H1 (cell line): ENCODE measurements at regions of chr18 and their contacts with region 1.

Region 1: DNA sequence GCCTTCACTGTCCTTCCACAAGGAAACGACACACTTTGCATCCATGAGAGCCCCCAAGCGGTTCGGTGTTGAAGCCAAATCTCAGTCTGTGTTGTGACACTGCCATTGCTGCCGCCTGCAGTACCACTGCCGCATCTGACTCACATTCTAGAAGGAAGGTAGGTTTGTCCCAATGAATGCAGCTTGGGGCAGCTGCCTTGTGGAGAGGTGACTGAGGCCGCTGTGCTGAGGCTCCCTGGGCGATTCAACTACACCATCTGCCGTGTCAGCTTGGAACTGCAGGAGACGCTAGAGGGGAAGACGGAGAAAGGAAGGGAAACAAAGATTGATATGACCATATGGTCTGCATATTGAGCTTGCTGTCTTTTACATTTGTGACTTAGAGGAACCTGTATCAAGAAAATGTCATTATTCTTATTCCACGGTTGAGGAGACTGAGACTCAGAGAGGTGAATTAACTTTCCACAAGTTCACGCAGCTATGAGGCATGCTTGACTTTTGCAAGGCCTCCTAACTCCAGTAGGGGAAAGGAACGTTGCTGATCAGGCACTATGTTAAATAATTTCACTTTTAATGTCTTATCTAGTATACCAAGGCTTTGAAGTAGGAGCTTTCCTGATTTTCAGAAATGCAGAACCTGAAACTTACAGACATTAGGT is 43.5 kb upstream of the LMAN1 start:
- DNase-seq: peak; percentile 88
- H3K4me3 ChIP-seq: no peak overlapping the region
- H3K27ac ChIP-seq: no peak overlapping the region
- H3K4me1 ChIP-seq: no peaks in the 10 kb centered on the region
- H3K27me3 ChIP-seq: no peaks in the 10 kb centered on the region
- CTCF ChIP-seq: peak; percentile 68 to 99 (median 98)
- EP300 ChIP-seq: no peak
- POLR2A ChIP-seq: no peak
- RAD21 ChIP-seq: peak; percentile 97 to 99

Region 2: GRCh38 chr18:59268721-59269562 is 133.6 kb before region 1 on chr18:
- CTCF ChIA-PET with region 1: interaction called, 67 read pairs
- POLR2A ChIA-PET with region 1: no interaction called
- DNase-seq: peak in 1 of 2 experiments; percentile 89
- H3K4me3 ChIP-seq: peak overlapping the region; percentile 51 to 67 (median 61)
- H3K27ac ChIP-seq: no peak overlapping the region
- H3K4me1 ChIP-seq: peaks cover 0 to 44% (median 24%) of the 10 kb centered on the region in 4 experiments; a peak in 6 of 7 replicates
- H3K27me3 ChIP-seq: peaks cover 88 to 98% (median 93%) of the 10 kb centered on the region in 4 experiments
- CTCF ChIP-seq: peak in 2 of 3 experiments; percentile 52 to 92; a peak in 3 of 4 replicates
- EP300 ChIP-seq: no peak
- POLR2A ChIP-seq: no peak
- RAD21 ChIP-seq: peak in 1 of 2 experiments; percentile 47; a peak in 2 of 4 replicates

Region 3: GRCh38 chr18:59300676-59301285 is 101.8 kb before region 1 on chr18:
- CTCF ChIA-PET with region 1: interaction called, 19 read pairs
- POLR2A ChIA-PET with region 1: no interaction called
- DNase-seq: no peak
- H3K4me3 ChIP-seq: no peak overlapping the region
- H3K27ac ChIP-seq: no peak overlapping the region
- H3K4me1 ChIP-seq: no peaks in the 10 kb centered on the region
- H3K27me3 ChIP-seq: peaks cover 0 to 2% (median 0%) of the 10 kb centered on the region in 4 experiments; a peak in 2 of 7 replicates
- CTCF ChIP-seq: no peak
- EP300 ChIP-seq: no peak
- POLR2A ChIP-seq: no peak
- RAD21 ChIP-seq: no peak

Region 4: DNA sequence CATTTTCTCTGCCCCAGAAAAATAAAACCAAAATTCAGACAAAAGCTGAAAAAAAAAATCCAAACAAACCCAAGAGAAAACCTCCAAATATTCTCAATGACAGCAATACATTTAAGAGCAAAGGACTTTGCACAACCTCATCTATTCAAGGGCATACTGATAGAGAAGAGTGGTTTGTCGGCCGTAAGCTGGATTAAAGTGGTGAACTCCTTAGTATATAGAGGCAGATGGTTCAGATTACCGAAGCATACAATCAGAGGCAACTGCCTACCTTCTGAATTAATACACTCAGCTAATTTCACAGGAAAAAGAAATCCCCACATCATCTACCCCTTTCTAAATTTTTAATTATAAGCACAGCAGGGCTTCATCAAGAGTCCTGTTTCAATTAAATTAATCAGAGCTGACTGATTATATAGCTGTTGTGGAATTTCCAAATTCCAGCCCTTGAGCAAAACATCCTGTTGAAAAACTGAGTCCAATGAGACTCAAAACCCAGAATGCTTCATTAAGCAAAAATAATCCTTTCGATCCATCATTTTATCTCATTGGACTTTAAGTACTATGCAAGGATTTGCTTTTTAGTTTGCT is 84.0 kb before region 1 on chr18 and contains the start of gene CPLX4:
- CTCF ChIA-PET with region 1: interaction called, 15 read pairs
- POLR2A ChIA-PET with region 1: no interaction called
- DNase-seq: no peak
- H3K4me3 ChIP-seq: no peak within 1 kb of the TSS
- H3K27ac ChIP-seq: no peak within 1 kb of the TSS
- H3K4me1 ChIP-seq: no peaks in the 10 kb centered on the region
- H3K27me3 ChIP-seq: no peaks in the 10 kb centered on the region
- CTCF ChIP-seq: no peak
- EP300 ChIP-seq: no peak
- POLR2A ChIP-seq: no peak
- RAD21 ChIP-seq: no peak
- total RNA-seq, gene CPLX4: not detected in 2 replicates

Region 5: GRCh38 chr18:59353079-59353680 is 49.4 kb before region 1 on chr18:
- CTCF ChIA-PET with region 1: interaction called, 24 read pairs
- POLR2A ChIA-PET with region 1: no interaction called
- DNase-seq: no peak
- H3K4me3 ChIP-seq: no peak overlapping the region
- H3K27ac ChIP-seq: no peak overlapping the region
- H3K4me1 ChIP-seq: no peaks in the 10 kb centered on the region; a peak in 2 of 7 replicates
- H3K27me3 ChIP-seq: no peaks in the 10 kb centered on the region
- CTCF ChIP-seq: no peak
- EP300 ChIP-seq: no peak
- POLR2A ChIP-seq: no peak
- RAD21 ChIP-seq: no peak

Region 6: GRCh38 chr18:59374128-59374527 is 28.4 kb before region 1 on chr18:
- CTCF ChIA-PET with region 1: interaction called, 13 read pairs
- POLR2A ChIA-PET with region 1: interaction called, 3 read pairs
- DNase-seq: no peak
- H3K4me3 ChIP-seq: no peak overlapping the region
- H3K27ac ChIP-seq: no peak overlapping the region
- H3K4me1 ChIP-seq: peaks cover 0 to 3% (median 0%) of the 10 kb centered on the region in 4 experiments; a peak in 1 of 7 replicates
- H3K27me3 ChIP-seq: no peaks in the 10 kb centered on the region
- CTCF ChIP-seq: no peak
- EP300 ChIP-seq: no peak
- POLR2A ChIP-seq: no peak
- RAD21 ChIP-seq: no peak

Region 7: GRCh38 chr18:59437851-59438569 is 35.4 kb after region 1 on chr18:
- CTCF ChIA-PET with region 1: interaction called, 11 read pairs
- POLR2A ChIA-PET with region 1: no interaction called
- DNase-seq: no peak
- H3K4me3 ChIP-seq: no peak overlapping the region
- H3K27ac ChIP-seq: no peak overlapping the region
- H3K4me1 ChIP-seq: no peaks in the 10 kb centered on the region
- H3K27me3 ChIP-seq: no peaks in the 10 kb centered on the region; a peak in 1 of 7 replicates
- CTCF ChIP-seq: no peak
- EP300 ChIP-seq: no peak
- POLR2A ChIP-seq: no peak
- RAD21 ChIP-seq: no peak

Region 8: GRCh38 chr18:59505356-59505755 is 102.8 kb after region 1 on chr18:
- CTCF ChIA-PET with region 1: no interaction called
- POLR2A ChIA-PET with region 1: no interaction called
- DNase-seq: no peak
- H3K4me3 ChIP-seq: no peak overlapping the region
- H3K27ac ChIP-seq: no peak overlapping the region
- H3K4me1 ChIP-seq: peaks cover 0 to 7% (median 0%) of the 10 kb centered on the region in 4 experiments; a peak in 1 of 7 replicates
- H3K27me3 ChIP-seq: no peaks in the 10 kb centered on the region
- CTCF ChIP-seq: no peak
- EP300 ChIP-seq: no peak
- POLR2A ChIP-seq: no peak
- RAD21 ChIP-seq: no peak